ENCODE measurements at regions of chr6 and their contacts with region 1.

Region 1: GRCh38 chr6:35624341-35625070 is 64.2 kb downstream of the FKBP5 start:
- DNase-seq: peak in 8 of 35 experiments; percentile 6 to 78 (median 25)
- ATAC-seq: peak; percentile 82 to 88 (median 84)
- H3K4me3 ChIP-seq: no peak overlapping the region
- H3K4me3 Mint-ChIP-seq: peak overlapping the region in 1 of 3 donors; percentile 5
- H3K27ac ChIP-seq: peak overlapping the region; percentile 57
- H3K27ac Mint-ChIP-seq: peak overlapping the region; percentile 88 to 94
- H3K4me1 ChIP-seq: peaks cover 19 to 36% of the 10 kb centered on the region in 2 experiments
- H3K4me1 Mint-ChIP-seq: peaks cover 49 to 59% (median 52%) of the 10 kb centered on the region in 3 donors
- H3K27me3 ChIP-seq: no peaks in the 10 kb centered on the region
- H3K27me3 Mint-ChIP-seq: no peaks in the 10 kb centered on the region

Region 2: GRCh38 chr6:35583893-35584688 is 40.4 kb before region 1 on chr6:
- CTCF ChIA-PET with region 1: interaction called, 6 to 54 read pairs
- POLR2A ChIA-PET with region 1: interaction called in 1 of 2 experiments, 6 read pairs
- DNase-seq: peak; percentile 46 to 88 (median 69)
- ATAC-seq: peak; percentile 67 to 77 (median 74)
- H3K4me3 ChIP-seq: no peak overlapping the region
- H3K4me3 Mint-ChIP-seq: peak overlapping the region in 1 of 3 donors; percentile 39
- H3K27ac ChIP-seq: peak overlapping the region; percentile 32
- H3K27ac Mint-ChIP-seq: peak overlapping the region; percentile 86 to 87
- H3K4me1 ChIP-seq: peaks cover 17 to 36% of the 10 kb centered on the region in 2 experiments
- H3K4me1 Mint-ChIP-seq: peaks cover 59 to 62% (median 61%) of the 10 kb centered on the region in 3 donors
- H3K27me3 ChIP-seq: no peaks in the 10 kb centered on the region
- H3K27me3 Mint-ChIP-seq: no peaks in the 10 kb centered on the region

Region 3: GRCh38 chr6:35590622-35591066 is 33.9 kb before region 1 on chr6:
- CTCF ChIA-PET with region 1: interaction called, 11 to 54 read pairs
- POLR2A ChIA-PET with region 1: interaction called in 1 of 2 experiments, 6 read pairs
- DNase-seq: no peak
- ATAC-seq: no peak
- H3K4me3 ChIP-seq: no peak overlapping the region
- H3K4me3 Mint-ChIP-seq: peak overlapping the region in 1 of 3 donors; percentile 67
- H3K27ac ChIP-seq: peak overlapping the region; percentile 42
- H3K27ac Mint-ChIP-seq: peak overlapping the region; percentile 84 to 92
- H3K4me1 ChIP-seq: peaks cover 54 to 83% of the 10 kb centered on the region in 2 experiments
- H3K4me1 Mint-ChIP-seq: peaks cover 90 to 95% (median 95%) of the 10 kb centered on the region in 3 donors
- H3K27me3 ChIP-seq: no peaks in the 10 kb centered on the region
- H3K27me3 Mint-ChIP-seq: no peaks in the 10 kb centered on the region

Region 4: DNA sequence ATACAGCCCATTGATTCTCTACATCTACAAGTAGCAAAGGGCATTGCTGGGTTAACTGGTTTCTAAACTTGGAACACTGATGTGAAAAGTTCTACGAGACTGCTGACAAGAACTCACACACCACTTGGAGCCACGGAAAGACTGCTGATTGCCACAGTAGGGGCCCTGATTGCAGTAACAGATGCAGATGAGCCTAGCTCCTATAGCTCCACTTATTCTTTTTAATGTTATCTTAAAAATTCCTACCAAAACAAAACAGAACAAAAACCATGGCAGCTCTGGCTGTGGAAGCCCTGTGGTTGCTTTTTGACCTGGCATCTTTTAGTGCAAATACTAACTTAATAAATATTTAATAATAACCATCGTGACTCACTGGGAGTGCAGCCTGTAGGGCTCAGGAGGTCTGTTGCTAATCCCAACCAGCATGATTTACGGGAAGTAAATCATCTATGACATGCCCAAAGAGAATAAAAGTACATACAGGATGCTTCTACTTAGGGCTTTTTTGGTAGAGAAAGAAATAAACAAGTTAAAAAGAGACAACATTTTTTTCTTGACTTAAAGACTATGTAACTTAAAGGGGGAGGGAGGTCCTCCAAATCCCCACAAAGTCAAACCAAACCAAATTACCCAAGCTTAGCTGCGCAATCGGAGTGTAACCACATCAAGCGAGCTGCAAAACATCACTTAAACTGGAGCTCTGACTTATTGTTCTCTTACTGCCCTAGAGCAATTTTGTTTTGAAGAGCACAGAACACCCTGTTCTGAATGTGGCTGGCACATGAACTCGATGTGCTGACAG is 23.0 kb before region 1 on chr6:
- CTCF ChIA-PET with region 1: interaction called, 5 to 63 read pairs
- POLR2A ChIA-PET with region 1: interaction called, 4 to 14 read pairs
- DNase-seq: peak; percentile 42 to 95 (median 74)
- ATAC-seq: peak; percentile 85 to 92 (median 88)
- H3K4me3 ChIP-seq: peak overlapping the region; percentile 43 to 46
- H3K4me3 Mint-ChIP-seq: peak overlapping the region; percentile 75 to 80 (median 75)
- H3K27ac ChIP-seq: peak overlapping the region; percentile 83
- H3K27ac Mint-ChIP-seq: peak overlapping the region; percentile 93 to 96
- H3K4me1 ChIP-seq: peaks cover 58 to 61% of the 10 kb centered on the region in 2 experiments
- H3K4me1 Mint-ChIP-seq: peaks cover 79 to 91% (median 84%) of the 10 kb centered on the region in 3 donors
- H3K27me3 ChIP-seq: no peaks in the 10 kb centered on the region
- H3K27me3 Mint-ChIP-seq: no peaks in the 10 kb centered on the region

Region 5: GRCh38 chr6:35642471-35643161 is 18.1 kb after region 1 on chr6:
- CTCF ChIA-PET with region 1: interaction called, 4 to 12 read pairs
- POLR2A ChIA-PET with region 1: interaction called in 1 of 2 experiments, 7 read pairs
- DNase-seq: peak in 12 of 35 experiments; percentile 5 to 43 (median 21)
- ATAC-seq: peak in 1 of 4 experiments; percentile 86
- H3K4me3 ChIP-seq: no peak overlapping the region
- H3K4me3 Mint-ChIP-seq: peak overlapping the region in 1 of 3 donors; percentile 23
- H3K27ac ChIP-seq: no peak overlapping the region
- H3K27ac Mint-ChIP-seq: peak overlapping the region; percentile 62 to 87
- H3K4me1 ChIP-seq: peaks cover 3 to 4% of the 10 kb centered on the region in 2 experiments
- H3K4me1 Mint-ChIP-seq: peaks cover 75 to 79% (median 76%) of the 10 kb centered on the region in 3 donors
- H3K27me3 ChIP-seq: no peaks in the 10 kb centered on the region
- H3K27me3 Mint-ChIP-seq: no peaks in the 10 kb centered on the region

Region 6: DNA sequence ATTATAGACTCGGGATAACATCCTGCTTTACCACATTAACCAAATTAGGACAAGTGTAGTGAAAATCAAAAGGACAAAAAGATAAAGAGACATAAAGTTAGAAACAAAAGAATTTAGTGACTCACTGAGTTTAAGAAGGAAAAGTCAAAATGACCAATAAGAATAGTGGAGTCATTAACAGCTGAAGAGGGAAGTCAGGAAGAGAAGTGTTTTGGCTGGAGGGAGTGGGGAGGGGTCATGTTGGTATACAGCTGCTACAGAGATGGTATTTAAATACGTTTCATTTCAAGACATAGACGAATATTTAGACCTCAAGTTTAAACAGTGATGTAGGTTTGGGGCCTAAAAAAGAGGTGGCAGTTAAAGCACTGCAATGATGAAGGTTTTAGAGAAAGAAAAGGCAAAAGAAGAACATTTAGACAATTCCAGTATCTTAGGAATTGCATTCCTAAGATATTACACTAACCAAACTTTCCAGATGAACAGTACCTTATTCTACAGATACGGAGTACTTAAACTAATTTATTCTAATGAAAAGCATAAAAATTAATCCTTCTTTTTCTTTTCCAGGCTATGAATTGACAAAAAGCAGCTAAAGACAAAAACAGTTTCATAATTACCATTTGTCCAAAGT is 53.6 kb after region 1 on chr6:
- CTCF ChIA-PET with region 1: interaction called, 7 to 13 read pairs
- POLR2A ChIA-PET with region 1: no interaction called
- DNase-seq: no peak
- ATAC-seq: no peak
- H3K4me3 ChIP-seq: no peak overlapping the region
- H3K4me3 Mint-ChIP-seq: peak overlapping the region; percentile 19 to 50 (median 21)
- H3K27ac ChIP-seq: peak overlapping the region; percentile 8
- H3K27ac Mint-ChIP-seq: peak overlapping the region; percentile 86
- H3K4me1 ChIP-seq: peaks cover 29 to 31% of the 10 kb centered on the region in 2 experiments
- H3K4me1 Mint-ChIP-seq: peaks cover 88 to 99% (median 92%) of the 10 kb centered on the region in 3 donors
- H3K27me3 ChIP-seq: no peaks in the 10 kb centered on the region
- H3K27me3 Mint-ChIP-seq: no peaks in the 10 kb centered on the region

Region 7: GRCh38 chr6:35687658-35688580 is 63.4 kb after region 1 on chr6:
- CTCF ChIA-PET with region 1: interaction called, 6 to 11 read pairs
- POLR2A ChIA-PET with region 1: no interaction called
- DNase-seq: peak in 31 of 35 experiments; percentile 17 to 69 (median 40)
- ATAC-seq: peak; percentile 37 to 60 (median 48)
- H3K4me3 ChIP-seq: peak overlapping the region; percentile 74 to 88
- H3K4me3 Mint-ChIP-seq: peak overlapping the region; percentile 90 to 96 (median 94)
- H3K27ac ChIP-seq: peak overlapping the region; percentile 51
- H3K27ac Mint-ChIP-seq: peak overlapping the region; percentile 94 to 97
- H3K4me1 ChIP-seq: peaks cover 7 to 24% of the 10 kb centered on the region in 2 experiments
- H3K4me1 Mint-ChIP-seq: peaks cover 9 to 22% (median 21%) of the 10 kb centered on the region in 3 donors
- H3K27me3 ChIP-seq: no peaks in the 10 kb centered on the region
- H3K27me3 Mint-ChIP-seq: no peaks in the 10 kb centered on the region

Measured in T-cell (primary cell).